Endothelial cell of umbilical vein (primary cell): ENCODE measurements at regions of chr2 and their contacts with region 1.

Region 1: DNA sequence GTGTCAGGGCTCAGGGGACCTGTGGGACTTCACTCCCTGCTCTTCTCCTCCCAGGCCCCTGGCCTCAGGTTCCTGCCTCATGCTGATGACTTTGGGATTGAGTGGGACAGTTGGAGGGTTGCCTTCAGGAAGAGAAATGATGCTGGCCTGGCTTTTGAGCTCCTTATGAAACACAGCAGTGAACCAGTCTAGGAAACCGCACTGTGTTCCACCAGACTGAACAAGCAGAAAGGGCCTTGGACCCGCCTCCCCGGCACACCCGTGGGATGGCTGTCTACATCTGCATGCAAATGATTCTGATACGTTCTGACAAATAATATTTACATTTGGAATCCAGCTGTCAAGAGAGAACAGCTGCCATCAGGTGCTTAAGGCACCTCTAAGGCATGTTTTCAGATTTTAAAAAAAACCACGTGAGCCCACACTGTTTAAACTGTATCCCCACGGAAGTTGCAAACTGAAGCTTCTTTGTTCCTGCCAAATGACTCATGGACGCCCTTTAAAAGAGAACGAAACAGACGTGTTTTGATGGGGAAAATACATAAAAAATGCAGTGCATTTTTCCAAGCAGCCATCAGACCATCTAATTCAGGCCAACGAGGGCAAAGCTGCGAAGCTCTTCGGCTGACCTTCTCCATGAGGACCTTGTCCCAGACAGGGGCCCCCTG is 27.6 kb upstream of the ASAP2 start:
- DNase-seq: peak; percentile 84
- H3K4me3 ChIP-seq: no peak overlapping the region
- H3K27ac ChIP-seq: peak overlapping the region; percentile 91
- H3K4me1 ChIP-seq: peaks cover 25% of the 10 kb centered on the region
- H3K27me3 ChIP-seq: no peaks in the 10 kb centered on the region
- CTCF ChIP-seq: no peak
- POLR2A ChIP-seq: no peak

Region 2: GRCh38 chr2:9149726-9150567 is 29.1 kb before region 1 on chr2:
- CTCF ChIA-PET with region 1: no interaction called
- POLR2A ChIA-PET with region 1: no interaction called
- dilution Hi-C with region 1: no loop called
- intact Hi-C with region 1: loop called (anchors 1 kb)
- DNase-seq: no peak
- H3K4me3 ChIP-seq: no peak overlapping the region
- H3K27ac ChIP-seq: no peak overlapping the region
- H3K4me1 ChIP-seq: no peaks in the 10 kb centered on the region
- H3K27me3 ChIP-seq: no peaks in the 10 kb centered on the region
- CTCF ChIP-seq: no peak
- POLR2A ChIP-seq: no peak

Region 3: DNA sequence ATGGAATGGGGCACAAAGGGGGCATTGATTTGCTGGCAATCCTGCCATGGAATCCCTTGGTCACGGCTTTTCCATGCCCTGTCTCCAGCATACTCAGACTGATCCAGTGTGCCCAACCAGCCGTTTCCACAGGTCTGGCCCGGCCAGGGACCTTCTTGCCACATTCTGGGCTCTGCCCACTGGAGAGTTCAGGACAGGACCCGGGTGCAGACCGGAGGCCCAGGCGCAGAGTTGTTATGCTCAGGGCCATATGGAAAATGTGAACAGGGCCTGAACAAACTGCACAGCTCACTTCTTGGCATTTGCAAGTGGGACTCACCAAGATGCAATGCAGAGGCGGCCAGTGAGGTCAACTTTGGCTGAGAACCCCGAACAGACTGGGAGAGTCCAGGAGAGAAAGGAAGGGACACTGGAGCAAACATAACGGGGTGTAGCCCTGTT is 12.0 kb after region 1 on chr2:
- CTCF ChIA-PET with region 1: interaction called, 5 read pairs
- POLR2A ChIA-PET with region 1: no interaction called
- dilution Hi-C with region 1: no loop called
- intact Hi-C with region 1: loop called (anchors 1 kb)
- DNase-seq: peak; percentile 80
- H3K4me3 ChIP-seq: no peak overlapping the region
- H3K27ac ChIP-seq: no peak overlapping the region
- H3K4me1 ChIP-seq: no peaks in the 10 kb centered on the region
- H3K27me3 ChIP-seq: no peaks in the 10 kb centered on the region
- CTCF ChIP-seq: no peak
- POLR2A ChIP-seq: no peak

Region 4: GRCh38 chr2:9287400-9288043 is 108.5 kb after region 1 on chr2:
- CTCF ChIA-PET with region 1: no interaction called
- POLR2A ChIA-PET with region 1: no interaction called
- dilution Hi-C with region 1: no loop called
- intact Hi-C with region 1: loop called (anchors 1 kb)
- DNase-seq: peak; percentile 93
- H3K4me3 ChIP-seq: no peak overlapping the region
- H3K27ac ChIP-seq: peak overlapping the region; percentile 86
- H3K4me1 ChIP-seq: peaks cover 39% of the 10 kb centered on the region
- H3K27me3 ChIP-seq: no peaks in the 10 kb centered on the region
- CTCF ChIP-seq: peak in 1 of 2 donors; percentile 33
- POLR2A ChIP-seq: peak; percentile 76

Region 5: GRCh38 chr2:9373077-9373875 is 194.2 kb after region 1 on chr2:
- CTCF ChIA-PET with region 1: no interaction called
- POLR2A ChIA-PET with region 1: no interaction called
- dilution Hi-C with region 1: loop called (anchors 25 kb)
- intact Hi-C with region 1: no loop called
- DNase-seq: no peak
- H3K4me3 ChIP-seq: no peak overlapping the region
- H3K27ac ChIP-seq: no peak overlapping the region
- H3K4me1 ChIP-seq: peaks cover 8% of the 10 kb centered on the region
- H3K27me3 ChIP-seq: no peaks in the 10 kb centered on the region
- CTCF ChIP-seq: no peak
- POLR2A ChIP-seq: no peak

Region 6: GRCh38 chr2:9430316-9431293 is 251.6 kb after region 1 on chr2:
- CTCF ChIA-PET with region 1: no interaction called
- POLR2A ChIA-PET with region 1: no interaction called
- dilution Hi-C with region 1: no loop called
- intact Hi-C with region 1: no loop called
- DNase-seq: peak; percentile 32
- H3K4me3 ChIP-seq: no peak overlapping the region
- H3K27ac ChIP-seq: peak overlapping the region; percentile 2
- H3K4me1 ChIP-seq: peaks cover 7% of the 10 kb centered on the region
- H3K27me3 ChIP-seq: no peaks in the 10 kb centered on the region
- CTCF ChIP-seq: no peak
- POLR2A ChIP-seq: no peak